PC-3 (cell line): ENCODE measurements at regions of chr5 and their contacts with region 1.

Region 1: GRCh38 chr5:97142521-97143254 is at the start of gene LIX1:
- DNase-seq: peak; percentile 63
- ATAC-seq: peak; percentile 87
- H3K4me3 ChIP-seq: no peak within 1 kb of the TSS
- H3K27ac ChIP-seq: no peak within 1 kb of the TSS
- H3K4me1 ChIP-seq: no peaks in the 10 kb centered on the region
- H3K27me3 ChIP-seq: no peaks in the 10 kb centered on the region
- CTCF ChIP-seq: peak; percentile 82
- total RNA-seq, gene LIX1: not detected in 2 replicates

Region 2: DNA sequence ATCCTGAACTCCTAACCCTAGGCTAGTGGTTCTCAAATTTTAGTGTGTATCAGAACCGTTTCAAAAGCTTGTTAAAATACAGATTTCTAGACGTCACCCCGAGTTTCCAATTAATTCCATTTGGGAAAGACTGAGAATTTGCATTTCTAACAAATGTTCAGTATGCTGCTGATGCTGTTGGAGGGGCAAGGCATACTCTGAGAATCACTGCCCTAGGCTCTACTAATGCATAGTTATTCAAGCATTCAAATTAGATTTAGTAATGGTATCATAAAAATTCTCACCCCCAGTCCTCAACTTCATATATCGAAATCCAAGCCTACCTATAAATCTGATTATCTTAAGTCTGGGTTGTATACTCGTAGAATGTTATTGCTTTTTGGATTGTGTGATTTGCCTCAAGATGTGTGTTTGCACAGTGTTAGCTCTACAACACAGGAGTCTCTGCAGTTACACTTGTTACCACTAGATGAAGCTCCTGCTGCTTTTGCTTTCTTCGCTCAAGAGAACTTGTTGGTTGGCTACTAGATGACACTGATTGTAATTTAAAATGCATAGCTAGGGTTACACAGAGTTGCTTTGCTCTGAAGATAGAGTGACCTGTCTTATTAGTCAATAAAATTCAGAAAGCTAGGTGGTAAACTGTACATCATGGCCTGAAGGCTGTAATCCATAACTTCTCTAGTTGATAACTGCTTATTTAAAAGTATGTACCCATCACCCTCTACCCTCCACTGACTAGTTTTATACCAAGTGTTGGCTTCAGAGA is 273.9 kb before region 1 on chr5:
- CTCF ChIA-PET with region 1: interaction called, 19 read pairs
- POLR2A ChIA-PET with region 1: no interaction called
- intact Hi-C with region 1: loop called (anchors 1 kb)
- DNase-seq: peak; percentile 76
- ATAC-seq: peak; percentile 97
- H3K4me3 ChIP-seq: no peak overlapping the region
- H3K27ac ChIP-seq: no peak overlapping the region
- H3K4me1 ChIP-seq: peaks cover 7% of the 10 kb centered on the region; the same call in 1 of the 2 replicates
- H3K27me3 ChIP-seq: no peaks in the 10 kb centered on the region
- CTCF ChIP-seq: peak; percentile 94

Region 3: DNA sequence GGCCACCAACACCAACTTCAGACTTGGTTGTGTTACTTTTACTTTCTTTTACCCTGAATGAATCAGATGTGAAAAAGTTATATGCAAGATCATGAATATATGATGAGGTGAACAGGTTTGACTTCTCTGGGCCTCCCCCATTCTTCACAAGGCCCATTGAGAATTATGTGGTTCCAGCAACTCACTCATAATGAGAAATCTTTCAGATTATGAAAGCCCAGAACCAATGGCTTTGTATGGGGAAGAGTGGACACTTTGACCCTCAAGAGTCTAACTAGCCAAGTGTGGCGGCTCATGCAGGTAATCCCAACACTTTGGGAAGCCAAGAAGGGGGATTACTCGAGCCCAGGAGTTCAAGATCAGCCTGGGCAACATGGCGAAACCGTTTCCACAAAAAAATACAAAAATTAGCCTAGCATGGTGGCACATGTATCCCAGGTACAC is 222.9 kb before region 1 on chr5:
- CTCF ChIA-PET with region 1: no interaction called
- POLR2A ChIA-PET with region 1: no interaction called
- intact Hi-C with region 1: loop called (anchors 5 kb)
- DNase-seq: no peak
- ATAC-seq: no peak
- H3K4me3 ChIP-seq: no peak overlapping the region
- H3K27ac ChIP-seq: no peak overlapping the region
- H3K4me1 ChIP-seq: peaks cover 18% of the 10 kb centered on the region
- H3K27me3 ChIP-seq: no peaks in the 10 kb centered on the region
- CTCF ChIP-seq: no peak

Region 4: DNA sequence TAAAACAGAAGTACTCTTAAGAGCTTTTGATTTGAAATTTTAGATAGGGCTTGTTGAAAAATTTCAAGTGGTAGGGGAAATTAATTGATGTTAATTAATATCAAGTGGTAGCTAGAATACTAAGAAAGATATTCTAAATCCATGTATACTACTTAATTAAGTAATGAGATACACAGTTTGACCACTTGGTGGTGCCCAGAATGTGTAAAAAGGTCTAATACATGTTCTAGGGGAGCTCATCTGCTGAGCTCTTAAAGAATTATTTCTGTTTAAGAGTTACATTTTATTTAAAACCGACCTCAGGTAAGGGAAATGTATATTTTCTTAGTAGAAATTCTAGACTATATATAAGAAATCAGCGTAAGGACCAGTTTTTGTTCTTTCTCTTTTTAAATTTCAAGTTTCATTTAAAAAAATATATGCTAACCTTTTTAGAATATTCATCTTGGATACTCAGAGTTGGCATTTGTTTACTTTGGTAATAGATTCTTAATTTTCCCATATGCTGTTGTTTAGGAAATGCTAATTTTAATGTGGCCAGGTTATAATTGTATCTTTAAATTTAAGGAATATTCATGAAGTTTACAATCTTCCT is 145.3 kb before region 1 on chr5:
- CTCF ChIA-PET with region 1: interaction called, 19 read pairs
- POLR2A ChIA-PET with region 1: interaction called, 5 read pairs
- intact Hi-C with region 1: loop called (anchors 1 kb)
- DNase-seq: peak; percentile 63
- ATAC-seq: peak; percentile 78
- H3K4me3 ChIP-seq: no peak overlapping the region
- H3K27ac ChIP-seq: no peak overlapping the region
- H3K4me1 ChIP-seq: no peaks in the 10 kb centered on the region
- H3K27me3 ChIP-seq: no peaks in the 10 kb centered on the region
- CTCF ChIP-seq: peak; percentile 73

Region 5: GRCh38 chr5:97044052-97044451 is 98.6 kb before region 1 on chr5:
- CTCF ChIA-PET with region 1: interaction called, 5 read pairs
- POLR2A ChIA-PET with region 1: no interaction called
- intact Hi-C with region 1: loop called (anchors 5 kb)
- DNase-seq: peak; percentile 49
- ATAC-seq: peak; percentile 74
- H3K4me3 ChIP-seq: no peak overlapping the region
- H3K27ac ChIP-seq: no peak overlapping the region
- H3K4me1 ChIP-seq: no peaks in the 10 kb centered on the region
- H3K27me3 ChIP-seq: no peaks in the 10 kb centered on the region
- CTCF ChIP-seq: peak; percentile 55

Region 6: GRCh38 chr5:97098922-97099321 is 43.8 kb before region 1 on chr5:
- CTCF ChIA-PET with region 1: no interaction called
- POLR2A ChIA-PET with region 1: no interaction called
- intact Hi-C with region 1: no loop called
- DNase-seq: no peak
- ATAC-seq: no peak
- H3K4me3 ChIP-seq: no peak overlapping the region
- H3K27ac ChIP-seq: no peak overlapping the region
- H3K4me1 ChIP-seq: no peaks in the 10 kb centered on the region
- H3K27me3 ChIP-seq: peaks cover 6% of the 10 kb centered on the region; the same call in 1 of the 2 replicates
- CTCF ChIP-seq: no peak